K562 (cell line): ENCODE measurements at regions of chr3 and their contacts with region 1.

Region 1: DNA sequence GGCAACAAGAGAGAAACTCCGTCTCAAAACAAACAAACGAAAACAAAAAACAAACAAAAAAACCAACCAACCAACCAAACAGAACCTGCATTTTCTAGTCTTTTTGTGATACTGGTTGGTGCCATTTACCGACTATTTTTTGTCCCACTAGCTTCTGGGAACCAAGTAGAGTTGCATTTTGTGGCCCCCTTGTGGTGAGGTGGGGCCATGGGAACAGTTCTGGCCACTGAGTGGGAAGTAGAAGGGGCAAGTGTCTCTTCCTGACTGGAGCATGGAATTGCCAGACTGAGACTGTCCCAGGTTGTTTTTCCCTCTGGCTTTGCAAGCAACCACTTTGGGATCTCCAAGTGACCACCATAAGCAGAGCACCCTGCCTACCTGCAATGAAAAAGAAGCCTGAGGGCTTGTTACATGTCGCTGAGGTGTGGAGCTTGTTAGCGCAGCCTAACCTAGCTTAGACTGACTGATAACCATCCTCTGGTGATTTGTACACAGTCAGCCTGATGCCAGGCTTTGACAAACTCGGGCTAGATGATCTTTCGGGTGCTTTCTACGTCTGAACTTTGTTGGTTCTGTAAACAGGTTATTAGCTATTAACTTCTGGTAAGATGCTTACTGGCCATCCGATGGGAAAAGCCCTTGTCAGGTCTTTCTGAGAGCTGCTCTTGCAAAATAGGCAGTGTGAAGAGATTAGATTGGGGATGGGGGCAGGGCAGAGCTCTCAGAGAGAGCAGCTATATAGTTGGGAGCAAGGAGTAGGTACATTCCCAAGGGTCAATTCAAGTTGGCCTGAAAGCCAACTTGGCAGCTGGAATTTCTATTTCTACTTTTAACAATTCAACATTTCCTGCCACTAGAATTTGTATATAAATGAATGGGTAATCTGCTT is 172.2 kb downstream of the SSR3 start:
- DNase-seq: peak; percentile 52 to 61 (median 60)
- ATAC-seq: peak; percentile 96
- H3K4me3 ChIP-seq: no peak overlapping the region
- H3K27ac ChIP-seq: no peak overlapping the region
- H3K4me1 ChIP-seq: no peaks in the 10 kb centered on the region
- H3K27me3 ChIP-seq: peaks cover 3 to 24% of the 10 kb centered on the region in 2 experiments; a peak in 4 of 5 replicates
- CTCF ChIP-seq: peak; percentile 74 to 82 (median 77)
- EP300 ChIP-seq: no peak
- POLR2A ChIP-seq: no peak
- RAD21 ChIP-seq: peak; percentile 55 to 78

Region 2: GRCh38 chr3:155651489-155652218 is 731.0 kb before region 1 on chr3:
- CTCF ChIA-PET with region 1: no interaction called
- POLR2A ChIA-PET with region 1: no interaction called
- in situ Hi-C with region 1: no loop called
- intact Hi-C with region 1: no loop called
- DNase-seq: no peak
- ATAC-seq: no peak
- H3K4me3 ChIP-seq: no peak overlapping the region
- H3K27ac ChIP-seq: no peak overlapping the region
- H3K4me1 ChIP-seq: no peaks in the 10 kb centered on the region
- H3K27me3 ChIP-seq: no peaks in the 10 kb centered on the region; a peak in 1 of 5 replicates
- CTCF ChIP-seq: no peak
- EP300 ChIP-seq: no peak
- POLR2A ChIP-seq: no peak
- RAD21 ChIP-seq: no peak

Region 3: DNA sequence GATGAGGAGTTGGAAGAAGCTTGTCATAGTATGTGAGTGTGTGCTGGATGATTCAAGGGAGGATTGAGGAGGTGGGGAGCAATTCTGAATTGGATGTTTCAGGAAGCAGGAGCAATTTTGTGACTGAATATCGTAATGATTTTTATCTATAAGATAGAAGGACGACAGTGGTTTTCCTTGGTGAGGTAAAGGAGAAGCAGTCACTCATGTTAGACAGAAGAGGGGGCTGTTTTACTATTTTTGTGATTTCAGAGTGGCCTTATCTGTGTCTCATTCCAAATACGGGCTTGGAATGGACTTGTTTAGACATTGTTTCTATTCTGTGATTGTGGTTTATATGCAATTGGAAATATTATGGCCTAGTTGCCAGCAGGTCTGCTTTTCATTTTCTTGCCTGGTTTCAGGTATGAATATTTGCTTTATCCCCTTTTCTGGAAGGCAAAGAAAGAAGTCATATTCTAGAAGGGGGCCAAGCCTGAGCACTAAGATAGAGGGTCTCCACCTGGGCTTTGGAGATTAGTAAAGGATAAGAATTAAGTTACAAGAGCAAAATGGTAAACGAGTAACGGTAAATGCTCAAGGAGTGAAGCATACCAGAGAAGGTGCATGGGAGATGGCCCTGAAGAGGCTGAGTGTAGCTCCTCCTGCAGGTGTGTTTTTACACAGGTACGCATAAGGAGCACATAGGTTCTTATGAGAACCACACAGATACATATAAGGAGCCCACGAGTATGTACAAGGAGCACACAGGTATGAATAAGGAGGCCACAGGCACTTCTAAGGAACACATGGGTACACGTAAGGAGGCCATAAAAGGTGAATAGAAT is 387.0 kb before region 1 on chr3:
- CTCF ChIA-PET with region 1: interaction called, 3 read pairs
- POLR2A ChIA-PET with region 1: no interaction called
- in situ Hi-C with region 1: no loop called
- intact Hi-C with region 1: loop called (anchors 10 kb)
- DNase-seq: peak; percentile 22 to 61 (median 42)
- ATAC-seq: peak; percentile 95
- H3K4me3 ChIP-seq: no peak overlapping the region
- H3K27ac ChIP-seq: no peak overlapping the region
- H3K4me1 ChIP-seq: no peaks in the 10 kb centered on the region
- H3K27me3 ChIP-seq: peaks cover 7 to 13% of the 10 kb centered on the region in 2 experiments; a peak in 3 of 5 replicates
- CTCF ChIP-seq: peak; percentile 44 to 82 (median 69); a peak in 5 of 6 replicates
- EP300 ChIP-seq: no peak
- POLR2A ChIP-seq: no peak
- RAD21 ChIP-seq: peak; percentile 71 to 83

Region 4: GRCh38 chr3:156151824-156152428 is 230.8 kb before region 1 on chr3:
- CTCF ChIA-PET with region 1: interaction called, 8 read pairs
- POLR2A ChIA-PET with region 1: interaction called, 3 read pairs
- in situ Hi-C with region 1: loop called (anchors 25 kb)
- intact Hi-C with region 1: loop called (anchors 1 kb)
- DNase-seq: peak; percentile 35 to 69 (median 49)
- ATAC-seq: peak; percentile 91
- H3K4me3 ChIP-seq: no peak overlapping the region
- H3K27ac ChIP-seq: no peak overlapping the region
- H3K4me1 ChIP-seq: peaks cover 0 to 7% of the 10 kb centered on the region in 2 experiments; a peak in 2 of 5 replicates
- H3K27me3 ChIP-seq: peaks cover 2 to 4% of the 10 kb centered on the region in 2 experiments; a peak in 2 of 5 replicates
- CTCF ChIP-seq: peak; percentile 79 to 92 (median 91)
- EP300 ChIP-seq: no peak
- POLR2A ChIP-seq: no peak
- RAD21 ChIP-seq: peak; percentile 67 to 85

Region 5: DNA sequence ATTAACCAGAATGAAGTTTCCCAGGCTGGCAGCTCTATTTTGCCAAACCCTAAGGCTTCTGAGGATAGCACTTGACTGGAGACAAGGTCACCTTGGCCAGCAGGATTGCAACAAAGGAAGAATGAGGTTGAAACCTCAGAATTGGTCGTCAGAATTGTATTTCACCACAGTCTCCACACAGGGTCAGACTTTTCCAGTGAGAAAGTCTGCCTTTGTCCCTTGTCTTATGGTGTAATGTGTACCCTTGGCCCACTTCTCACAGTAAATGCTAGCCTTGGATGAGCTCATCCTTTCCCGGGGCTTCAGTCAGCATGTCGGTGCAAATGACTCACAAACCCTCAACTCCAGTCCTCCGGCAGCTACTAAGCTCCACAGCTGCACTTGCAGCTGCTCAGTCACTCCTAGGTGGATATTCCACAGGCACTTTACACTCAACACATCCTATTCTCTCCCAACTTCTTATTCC is 152.5 kb after region 1 on chr3:
- CTCF ChIA-PET with region 1: no interaction called
- POLR2A ChIA-PET with region 1: no interaction called
- in situ Hi-C with region 1: no loop called
- intact Hi-C with region 1: no loop called
- DNase-seq: peak in 2 of 4 experiments; percentile 44 to 65
- ATAC-seq: peak; percentile 87
- H3K4me3 ChIP-seq: no peak overlapping the region
- H3K27ac ChIP-seq: no peak overlapping the region
- H3K4me1 ChIP-seq: no peaks in the 10 kb centered on the region; a peak in 1 of 5 replicates
- H3K27me3 ChIP-seq: no peaks in the 10 kb centered on the region
- CTCF ChIP-seq: peak; percentile 22 to 48 (median 42); a peak in 4 of 6 replicates
- EP300 ChIP-seq: no peak
- POLR2A ChIP-seq: no peak
- RAD21 ChIP-seq: peak; percentile 13 to 74; a peak in 2 of 4 replicates